Prostate gland (tissue), 2 donors: ENCODE measurements at regions of chr13 and their contacts with region 1.

Region 1: GRCh38 chr13:110396913-110397381 is 89.9 kb downstream of the COL4A2 start:
- DNase-seq: peak; percentile 85
- H3K4me3 ChIP-seq: no peak overlapping the region
- H3K27ac ChIP-seq: peak overlapping the region; percentile 80 to 81
- H3K4me1 ChIP-seq: no peaks in the 10 kb centered on the region
- H3K27me3 ChIP-seq: no peaks in the 10 kb centered on the region
- CTCF ChIP-seq: peak in 1 of 4 experiments; percentile 11
- POLR2A ChIP-seq: no peak

Region 2: GRCh38 chr13:110162866-110163668 is 233.9 kb before region 1 on chr13:
- intact Hi-C with region 1: no loop called
- DNase-seq: no peak
- H3K4me3 ChIP-seq: no peak overlapping the region
- H3K27ac ChIP-seq: no peak overlapping the region
- H3K4me1 ChIP-seq: no peaks in the 10 kb centered on the region
- H3K27me3 ChIP-seq: no peaks in the 10 kb centered on the region
- CTCF ChIP-seq: no peak
- POLR2A ChIP-seq: no peak

Region 3: GRCh38 chr13:110306960-110307746 is 89.8 kb before region 1 on chr13 and contains the starts of genes COL4A1 and COL4A2:
- intact Hi-C with region 1: loop called (anchors 5 kb)
- DNase-seq: peak; percentile 31
- H3K4me3 ChIP-seq: peak within 1 kb of the TSS; percentile 49 to 51
- H3K27ac ChIP-seq: peak within 1 kb of the TSS; percentile 86 to 91
- H3K4me1 ChIP-seq: no peaks in the 10 kb centered on the region
- H3K27me3 ChIP-seq: no peaks in the 10 kb centered on the region
- CTCF ChIP-seq: no peak
- POLR2A ChIP-seq: peak; percentile 64
- total RNA-seq, gene COL4A1: 37.3 to 132 TPM
- total RNA-seq, gene COL4A2: 82.8 to 193 TPM

Region 4: DNA sequence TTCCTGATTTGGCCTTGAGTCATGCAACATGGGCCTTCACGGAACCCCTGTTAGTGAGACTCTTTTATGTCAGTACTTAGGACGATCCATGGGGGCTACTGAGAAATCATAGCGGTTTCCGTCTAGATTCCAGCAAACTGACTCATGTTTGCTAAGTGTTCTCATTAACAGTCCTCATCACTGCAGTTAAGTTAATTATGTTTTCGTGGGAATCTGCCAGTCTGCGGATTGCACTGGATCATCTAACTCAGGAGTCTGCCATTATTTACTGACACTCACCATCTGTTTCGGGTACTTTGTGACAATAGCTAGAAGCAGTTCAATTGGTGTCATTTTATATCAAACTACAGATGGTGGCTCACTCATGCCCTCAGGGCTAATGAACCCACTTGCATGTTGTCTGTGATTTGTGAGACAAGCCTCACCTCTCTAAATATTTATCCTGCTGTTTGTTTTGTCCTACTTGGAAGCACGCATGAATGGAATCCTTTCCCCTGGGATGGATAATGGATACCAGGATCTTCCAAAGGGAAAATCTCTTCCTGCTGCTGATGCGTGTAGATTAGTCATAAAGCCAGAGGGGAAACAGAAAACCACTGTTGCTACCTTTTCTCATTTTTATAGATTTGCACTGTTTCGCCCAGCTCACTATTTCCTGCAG is 102.8 kb after region 1 on chr13:
- intact Hi-C with region 1: no loop called
- DNase-seq: no peak
- H3K4me3 ChIP-seq: no peak overlapping the region
- H3K27ac ChIP-seq: no peak overlapping the region
- H3K4me1 ChIP-seq: no peaks in the 10 kb centered on the region
- H3K27me3 ChIP-seq: no peaks in the 10 kb centered on the region
- CTCF ChIP-seq: no peak
- POLR2A ChIP-seq: no peak